ENCODE measurements at regions of chr15 and their contacts with region 1.

Region 1: DNA sequence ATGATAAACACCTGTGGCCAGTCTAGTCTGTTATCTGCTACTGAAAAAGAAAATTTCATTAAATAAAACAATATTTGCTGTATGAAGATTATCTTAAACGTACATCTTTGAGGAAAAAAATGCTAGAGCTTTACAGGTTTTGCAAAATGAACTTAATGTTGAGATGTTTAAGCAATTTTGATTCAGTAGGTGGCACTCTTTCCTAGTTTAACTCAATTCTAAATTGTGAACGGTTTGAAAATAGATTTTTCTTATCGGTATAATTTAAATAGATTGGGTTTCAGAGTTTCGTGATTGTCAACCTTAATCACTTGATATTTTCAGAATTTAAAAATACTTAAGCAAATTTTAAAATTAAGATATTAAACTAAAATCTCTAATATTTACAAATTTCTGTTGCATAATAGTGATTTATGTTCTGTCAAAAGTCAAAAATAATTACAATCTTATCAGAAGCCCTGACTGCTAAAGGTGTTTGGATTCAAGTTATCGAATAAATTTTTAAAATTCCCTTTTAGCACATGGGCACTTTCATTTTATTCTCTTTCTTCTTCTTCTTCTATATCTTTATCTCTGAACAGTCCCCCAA is 7.0 kb upstream of the RNF111 start:
- DNase-seq: peak; percentile 38
- H3K4me3 Mint-ChIP-seq: no peak overlapping the region
- H3K27ac Mint-ChIP-seq: no peak overlapping the region
- H3K4me1 Mint-ChIP-seq: no peaks in the 10 kb centered on the region
- H3K27me3 Mint-ChIP-seq: peaks cover 18% of the 10 kb centered on the region
- CTCF ChIP-seq: peak; percentile 41

Region 2: GRCh38 chr15:58641660-58642059 is 338.8 kb before region 1 on chr15:
- CTCF ChIA-PET with region 1: no interaction called
- POLR2A ChIA-PET with region 1: no interaction called
- intact Hi-C with region 1: no loop called
- DNase-seq: no peak
- H3K4me3 Mint-ChIP-seq: no peak overlapping the region
- H3K27ac Mint-ChIP-seq: no peak overlapping the region
- H3K4me1 Mint-ChIP-seq: no peaks in the 10 kb centered on the region
- H3K27me3 Mint-ChIP-seq: no peaks in the 10 kb centered on the region
- CTCF ChIP-seq: no peak

Region 3: DNA sequence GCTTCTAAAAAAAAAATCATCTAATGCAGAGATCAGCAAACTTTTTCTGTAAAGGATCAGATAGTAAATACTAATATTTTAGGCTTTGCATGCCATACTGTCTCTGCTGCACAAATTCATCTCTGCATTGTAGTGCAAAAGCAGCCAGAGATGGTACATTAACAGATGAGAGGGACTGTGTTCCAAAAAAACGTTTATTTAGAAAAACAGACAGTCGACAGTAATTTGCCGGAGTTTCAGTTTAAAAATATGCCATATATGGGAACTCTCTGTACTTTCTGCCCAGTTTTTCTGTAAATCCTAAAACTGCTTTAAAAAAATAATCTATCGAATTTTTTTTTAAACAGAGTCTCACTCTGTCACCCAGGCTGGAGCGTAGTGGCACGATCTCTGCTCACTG is 195.1 kb before region 1 on chr15:
- CTCF ChIA-PET with region 1: no interaction called
- POLR2A ChIA-PET with region 1: no interaction called
- intact Hi-C with region 1: no loop called
- DNase-seq: no peak
- H3K4me3 Mint-ChIP-seq: no peak overlapping the region
- H3K27ac Mint-ChIP-seq: no peak overlapping the region
- H3K4me1 Mint-ChIP-seq: no peaks in the 10 kb centered on the region
- H3K27me3 Mint-ChIP-seq: no peaks in the 10 kb centered on the region
- CTCF ChIP-seq: no peak

Region 4: GRCh38 chr15:58889363-58889762 is 91.1 kb before region 1 on chr15:
- CTCF ChIA-PET with region 1: no interaction called
- POLR2A ChIA-PET with region 1: no interaction called
- intact Hi-C with region 1: no loop called
- DNase-seq: no peak
- H3K4me3 Mint-ChIP-seq: no peak overlapping the region
- H3K27ac Mint-ChIP-seq: no peak overlapping the region
- H3K4me1 Mint-ChIP-seq: no peaks in the 10 kb centered on the region
- H3K27me3 Mint-ChIP-seq: no peaks in the 10 kb centered on the region
- CTCF ChIP-seq: no peak

Region 5: GRCh38 chr15:59138243-59138642 is 157.8 kb after region 1 on chr15:
- CTCF ChIA-PET with region 1: no interaction called
- POLR2A ChIA-PET with region 1: no interaction called
- intact Hi-C with region 1: loop called (anchors 2 kb)
- DNase-seq: peak; percentile 54
- H3K4me3 Mint-ChIP-seq: no peak overlapping the region
- H3K27ac Mint-ChIP-seq: no peak overlapping the region
- H3K4me1 Mint-ChIP-seq: peaks cover 15% of the 10 kb centered on the region
- H3K27me3 Mint-ChIP-seq: no peaks in the 10 kb centered on the region
- CTCF ChIP-seq: peak; percentile 56

Region 6: GRCh38 chr15:59501597-59501996 is 521.2 kb after region 1 on chr15:
- CTCF ChIA-PET with region 1: interaction called, 22 read pairs
- POLR2A ChIA-PET with region 1: no interaction called
- intact Hi-C with region 1: loop called (anchors 2 kb)
- DNase-seq: peak; percentile 75
- H3K4me3 Mint-ChIP-seq: no peak overlapping the region
- H3K27ac Mint-ChIP-seq: no peak overlapping the region
- H3K4me1 Mint-ChIP-seq: no peaks in the 10 kb centered on the region
- H3K27me3 Mint-ChIP-seq: no peaks in the 10 kb centered on the region
- CTCF ChIP-seq: peak; percentile 74